HEK293T (cell line): ENCODE measurements at regions of chrX and their contacts with region 1.

Region 1: DNA sequence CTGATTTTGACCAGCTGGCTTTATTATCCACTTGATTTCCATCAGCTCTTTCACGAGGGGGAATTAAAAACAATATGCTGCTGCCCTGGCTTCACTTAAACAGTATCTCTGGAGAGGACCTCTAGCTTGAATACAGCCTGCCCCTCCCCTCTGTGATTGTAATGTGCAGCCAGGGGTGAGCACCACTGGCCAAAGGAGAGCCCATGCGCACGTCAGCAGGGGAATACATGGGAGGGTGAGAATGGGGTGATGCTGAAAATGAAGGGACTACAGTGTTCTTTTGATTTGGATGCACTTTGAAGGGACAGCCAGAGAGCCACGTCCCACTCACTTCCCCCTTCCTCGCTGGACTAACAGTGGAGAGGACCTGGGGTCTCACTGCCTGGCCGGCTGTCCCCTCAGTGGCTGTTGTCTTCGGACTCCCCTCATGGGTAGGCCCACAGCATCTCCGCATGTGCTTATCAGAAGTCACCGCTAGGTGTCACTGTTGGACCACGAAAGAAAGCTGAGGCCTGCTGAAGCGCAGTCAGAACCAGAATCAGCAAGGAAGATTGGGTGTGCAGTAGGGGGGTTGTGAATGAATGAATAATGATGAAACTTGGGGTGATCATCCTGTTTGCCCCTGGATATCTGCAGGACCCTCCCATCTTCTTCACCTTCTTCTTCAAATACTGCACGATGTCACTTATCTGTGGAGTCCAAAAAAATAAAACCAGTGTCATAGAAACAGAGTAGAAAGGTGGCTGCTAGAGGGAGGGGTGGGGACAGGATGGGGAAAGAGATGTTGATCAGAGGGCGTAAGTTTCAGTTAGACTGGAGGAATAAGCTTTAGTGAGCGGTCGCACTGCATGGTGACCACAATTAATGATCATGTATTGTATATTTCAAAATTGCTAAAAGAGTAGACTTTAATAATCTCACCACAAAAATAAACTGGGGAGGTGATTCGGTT is 32.8 kb downstream of the CLCN4 start:
- DNase-seq: peak; percentile 74

Region 2: DNA sequence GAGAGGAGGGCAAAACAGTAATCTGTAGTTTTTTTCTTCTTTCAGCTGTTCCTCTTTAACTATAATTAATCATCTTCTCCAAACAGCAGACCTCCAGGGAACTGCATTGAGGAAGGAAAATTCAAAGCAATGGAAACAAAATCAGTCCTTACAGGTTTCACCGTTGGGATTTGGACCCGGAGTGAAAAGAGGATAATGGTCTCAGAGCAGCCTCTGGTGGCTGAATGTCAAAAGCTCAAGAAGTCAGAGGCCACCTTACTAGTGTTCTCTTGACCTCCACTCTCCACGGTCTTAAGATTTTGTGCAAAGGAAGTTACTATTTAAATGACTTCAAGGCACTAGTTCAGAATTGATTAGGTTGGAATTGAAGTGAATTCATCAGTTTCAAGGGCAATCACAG is 446.7 kb after region 1 on chrX:
- CTCF ChIA-PET with region 1: interaction called, 18 read pairs
- POLR2A ChIA-PET with region 1: no interaction called
- DNase-seq: peak; percentile 48

Region 3: GRCh38 chrX:10722851-10723250 is 533.3 kb after region 1 on chrX:
- CTCF ChIA-PET with region 1: interaction called, 18 read pairs
- POLR2A ChIA-PET with region 1: no interaction called
- DNase-seq: peak; percentile 60